Gastrocnemius medialis (tissue), 4 donors: ENCODE measurements at regions of chr11 and their contacts with region 1.

Region 1: DNA sequence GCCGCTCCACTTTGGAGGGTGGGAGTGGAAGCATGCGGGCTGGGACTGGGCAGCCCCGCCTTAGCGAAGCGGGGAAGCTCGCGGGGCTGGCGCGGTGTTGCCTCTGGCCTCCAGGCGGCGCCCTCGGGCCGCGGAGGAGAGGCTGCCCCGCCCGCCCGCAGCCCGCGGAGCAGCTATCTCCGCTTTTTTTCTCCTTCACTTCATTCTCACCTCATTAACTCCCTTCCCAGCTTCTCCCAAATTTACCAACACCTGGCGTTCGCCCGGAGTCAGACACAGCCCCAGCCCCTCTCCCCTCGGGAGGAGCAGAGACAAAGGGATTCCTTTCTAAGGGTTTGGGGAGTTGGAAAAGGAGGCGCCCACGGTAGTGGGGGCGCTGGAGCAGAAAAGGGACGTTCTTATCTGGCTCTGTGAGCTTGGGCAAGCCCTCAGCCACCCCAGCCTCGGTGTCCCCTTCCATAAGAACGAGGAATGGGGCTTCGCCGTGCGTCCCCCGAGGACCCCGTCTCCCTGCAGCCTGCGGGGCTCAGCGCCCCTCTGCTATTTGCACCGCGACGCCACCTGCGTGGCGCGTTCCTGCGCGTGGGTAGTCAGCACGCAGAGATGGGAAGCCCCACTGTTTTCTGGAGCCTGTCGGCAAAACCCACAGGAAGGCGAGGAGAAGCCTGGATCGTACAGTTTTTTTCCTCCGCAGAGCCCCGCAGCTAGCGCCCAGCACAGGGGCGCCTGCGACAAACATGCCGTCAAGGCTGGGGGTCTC is 1.5 kb upstream of the WNT11 start:
- DNase-seq: peak; percentile 64 to 75
- ATAC-seq: peak; percentile 57
- H3K4me3 ChIP-seq: peak overlapping the region; percentile 64 to 94 (median 77)
- H3K27ac ChIP-seq: peak overlapping the region; percentile 84 to 90 (median 86)
- H3K4me1 ChIP-seq: peaks cover 7 to 23% of the 10 kb centered on the region in 2 donors
- H3K27me3 ChIP-seq: no peaks in the 10 kb centered on the region
- CTCF ChIP-seq: peak; percentile 90 to 99 (median 97)
- POLR2A ChIP-seq: no peak

Region 2: GRCh38 chr11:75896843-75897419 is 310.9 kb before region 1 on chr11:
- in situ Hi-C with region 1: no loop called
- intact Hi-C with region 1: loop called (anchors 2 kb)
- DNase-seq: no peak
- ATAC-seq: peak in 1 of 2 donors; percentile 46
- H3K4me3 ChIP-seq: no peak overlapping the region
- H3K27ac ChIP-seq: no peak overlapping the region
- H3K4me1 ChIP-seq: peaks cover 13 to 21% of the 10 kb centered on the region in 2 donors
- H3K27me3 ChIP-seq: no peaks in the 10 kb centered on the region
- CTCF ChIP-seq: peak; percentile 61 to 74 (median 63)
- POLR2A ChIP-seq: no peak

Region 3: DNA sequence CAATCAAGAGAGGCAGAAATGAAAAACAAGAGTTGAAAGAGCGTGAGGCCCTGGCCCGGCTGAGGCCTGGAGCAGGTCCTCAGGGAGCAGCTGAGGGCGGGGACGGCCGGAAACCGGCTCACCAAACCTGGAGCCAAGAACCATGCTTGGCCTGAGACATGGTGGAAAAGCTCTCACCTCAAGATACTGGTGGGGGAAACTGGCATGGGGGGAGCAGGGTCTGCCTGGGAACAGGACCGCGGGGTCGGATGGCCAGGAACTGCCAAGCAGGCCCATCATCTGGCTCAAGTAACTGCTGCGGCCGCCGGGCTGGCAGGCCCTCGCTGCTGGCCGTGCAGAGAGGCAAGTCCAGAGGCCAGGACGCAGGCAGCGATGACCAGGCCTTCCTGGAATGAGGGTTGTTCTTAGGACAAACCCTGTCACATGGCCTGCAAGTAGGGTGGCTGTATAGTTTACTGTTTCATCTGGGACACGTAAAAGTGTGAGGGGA is 17.3 kb after region 1 on chr11:
- in situ Hi-C with region 1: no loop called
- intact Hi-C with region 1: loop called (anchors 1 kb)
- DNase-seq: peak; percentile 56 to 79
- ATAC-seq: peak; percentile 93 to 97
- H3K4me3 ChIP-seq: peak overlapping the region in 1 of 4 donors; percentile 19
- H3K27ac ChIP-seq: peak overlapping the region; percentile 79 to 85 (median 83)
- H3K4me1 ChIP-seq: peaks cover 16 to 20% of the 10 kb centered on the region in 2 donors
- H3K27me3 ChIP-seq: no peaks in the 10 kb centered on the region
- CTCF ChIP-seq: no peak
- POLR2A ChIP-seq: no peak

Region 4: GRCh38 chr11:76318744-76319384 is 111.0 kb after region 1 on chr11:
- in situ Hi-C with region 1: loop called (anchors 10 kb)
- intact Hi-C with region 1: loop called (anchors 1 kb)
- DNase-seq: peak; percentile 63 to 69
- ATAC-seq: peak; percentile 90 to 93
- H3K4me3 ChIP-seq: no peak overlapping the region
- H3K27ac ChIP-seq: no peak overlapping the region
- H3K4me1 ChIP-seq: no peaks in the 10 kb centered on the region
- H3K27me3 ChIP-seq: peaks cover 5 to 9% (median 8%) of the 10 kb centered on the region in 3 donors
- CTCF ChIP-seq: peak; percentile 89 to 95 (median 94)
- POLR2A ChIP-seq: no peak

Region 5: GRCh38 chr11:76339221-76339620 is 131.4 kb after region 1 on chr11:
- in situ Hi-C with region 1: no loop called
- intact Hi-C with region 1: no loop called
- DNase-seq: peak; percentile 57 to 83
- ATAC-seq: peak; percentile 91 to 94
- H3K4me3 ChIP-seq: no peak overlapping the region
- H3K27ac ChIP-seq: peak overlapping the region; percentile 38 to 80 (median 69)
- H3K4me1 ChIP-seq: peaks cover 0 to 13% of the 10 kb centered on the region in 2 donors
- H3K27me3 ChIP-seq: no peaks in the 10 kb centered on the region
- CTCF ChIP-seq: no peak
- POLR2A ChIP-seq: no peak

Region 6: GRCh38 chr11:76444384-76445123 is 236.7 kb after region 1 on chr11 and contains the start of gene EMSY:
- in situ Hi-C with region 1: no loop called
- intact Hi-C with region 1: loop called (anchors 2 kb)
- DNase-seq: peak; percentile 98
- ATAC-seq: peak; percentile 97 to 98
- H3K4me3 ChIP-seq: peak within 1 kb of the TSS; percentile 97 to 99 (median 99)
- H3K27ac ChIP-seq: peak within 1 kb of the TSS; percentile 97 to 98 (median 97)
- H3K4me1 ChIP-seq: peaks cover 16 to 25% of the 10 kb centered on the region in 2 donors
- H3K27me3 ChIP-seq: no peaks in the 10 kb centered on the region
- CTCF ChIP-seq: no peak
- POLR2A ChIP-seq: peak; percentile 95 to 98
- total RNA-seq, gene EMSY: 18.8 to 43.6 (median 19.9) TPM